ENCODE measurements at regions of chr18 and their contacts with region 1.

Region 1: DNA sequence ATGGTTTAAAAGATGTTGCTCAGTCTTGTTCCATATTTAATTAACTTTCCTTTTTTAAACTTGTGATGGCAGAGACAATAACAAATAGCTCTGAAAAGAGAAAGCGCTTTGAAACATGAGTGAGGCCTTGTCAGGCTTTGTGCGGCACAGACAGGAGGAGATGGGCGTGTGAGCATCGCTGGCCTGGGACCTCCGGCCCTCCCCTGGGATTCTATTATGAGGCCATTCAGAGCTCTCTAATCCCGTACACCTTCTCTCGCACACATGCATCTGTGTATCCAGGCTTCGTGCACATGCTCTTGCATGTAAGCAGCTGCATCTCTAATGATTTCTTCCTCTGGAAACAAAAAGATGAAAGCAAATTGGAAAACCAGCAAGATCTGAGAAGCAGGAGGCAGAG is 313.7 kb downstream of the ZNF521 start:
- DNase-seq: no peak
- H3K4me3 ChIP-seq: no peak overlapping the region
- H3K27ac ChIP-seq: no peak overlapping the region
- H3K4me1 ChIP-seq: no peaks in the 10 kb centered on the region
- CTCF ChIP-seq: no peak

Region 2: GRCh38 chr18:24995056-24995455 is 43.2 kb before region 1 on chr18:
- CTCF ChIA-PET with region 1: no interaction called
- POLR2A ChIA-PET with region 1: no interaction called
- intact Hi-C with region 1: no loop called
- DNase-seq: no peak
- H3K4me3 ChIP-seq: no peak overlapping the region
- H3K27ac ChIP-seq: no peak overlapping the region
- H3K4me1 ChIP-seq: peaks cover 1% of the 10 kb centered on the region
- CTCF ChIP-seq: no peak

Region 3: DNA sequence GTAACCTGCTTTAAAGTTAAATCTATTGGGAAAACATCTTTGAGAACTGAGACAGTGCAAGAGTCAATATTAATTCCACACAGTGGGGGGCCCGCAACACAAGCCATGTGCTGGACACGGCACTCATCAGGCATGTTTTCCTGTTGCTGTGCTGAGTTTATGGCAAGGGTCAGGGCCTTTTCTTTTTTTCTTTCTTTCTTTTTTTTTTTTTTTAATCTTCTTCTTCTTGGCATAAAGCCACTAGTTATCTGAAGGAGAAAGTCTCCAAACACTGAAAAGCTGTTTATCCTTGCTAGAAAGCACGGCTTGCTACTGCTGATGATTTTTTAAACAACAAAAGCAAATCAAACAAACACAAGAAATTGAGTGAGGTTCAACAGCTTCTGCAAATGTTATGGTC is 61.6 kb after region 1 on chr18:
- CTCF ChIA-PET with region 1: no interaction called
- POLR2A ChIA-PET with region 1: no interaction called
- intact Hi-C with region 1: loop called (anchors 10 kb)
- DNase-seq: no peak
- H3K4me3 ChIP-seq: no peak overlapping the region
- H3K27ac ChIP-seq: no peak overlapping the region
- H3K4me1 ChIP-seq: peaks cover 33% of the 10 kb centered on the region
- CTCF ChIP-seq: no peak